Adrenal gland (tissue), 19 donors: ENCODE measurements at regions of chr13 and their contacts with region 1.

Region 1: GRCh38 chr13:85223883-85224656 is 575.1 kb downstream of the SLITRK6 start:
- DNase-seq: no peak
- H3K4me3 ChIP-seq: no peak overlapping the region
- H3K27ac ChIP-seq: no peak overlapping the region
- H3K4me1 ChIP-seq: no peaks in the 10 kb centered on the region
- H3K27me3 ChIP-seq: no peaks in the 10 kb centered on the region
- CTCF ChIP-seq: no peak
- POLR2A ChIP-seq: no peak

Region 2: DNA sequence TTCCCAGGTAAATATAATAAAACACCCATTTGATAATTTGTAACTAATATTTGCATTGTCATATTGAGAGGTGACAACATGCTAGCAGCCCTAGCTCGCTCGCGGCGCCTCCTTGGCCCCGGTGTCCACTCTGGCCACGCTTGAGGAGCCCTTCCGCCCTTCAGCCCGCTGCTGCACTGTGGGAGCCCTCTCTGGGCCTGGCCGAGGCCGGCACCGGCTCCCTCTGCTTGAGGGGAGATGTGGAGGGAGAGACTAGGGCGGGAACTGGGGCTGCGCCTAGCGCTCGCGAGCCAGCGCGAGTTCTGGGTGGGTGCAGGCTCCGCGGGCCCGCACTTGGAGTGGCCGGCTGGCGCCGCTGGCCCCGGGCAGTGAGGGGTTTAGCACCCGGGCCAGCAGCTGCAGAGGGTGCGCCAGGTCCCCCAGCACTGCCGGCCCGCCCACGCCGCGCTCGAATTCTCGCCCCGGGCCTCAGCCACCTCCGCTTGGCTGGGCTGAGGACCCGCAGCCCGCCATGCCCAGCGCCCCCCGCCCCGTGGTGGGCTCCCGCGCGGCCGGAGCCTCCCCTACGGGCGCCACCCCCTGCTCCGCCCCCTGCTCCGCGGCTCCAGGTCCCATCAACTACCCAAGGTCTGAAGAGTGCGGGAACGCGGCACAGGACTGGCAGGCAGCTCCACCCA is 19.3 kb before region 1 on chr13:
- intact Hi-C with region 1: loop called in 1 of 2 experiments (anchors 2 kb)
- DNase-seq: no peak
- H3K4me3 ChIP-seq: no peak overlapping the region
- H3K27ac ChIP-seq: no peak overlapping the region
- H3K4me1 ChIP-seq: no peaks in the 10 kb centered on the region
- H3K27me3 ChIP-seq: no peaks in the 10 kb centered on the region
- CTCF ChIP-seq: no peak
- POLR2A ChIP-seq: no peak

Region 3: DNA sequence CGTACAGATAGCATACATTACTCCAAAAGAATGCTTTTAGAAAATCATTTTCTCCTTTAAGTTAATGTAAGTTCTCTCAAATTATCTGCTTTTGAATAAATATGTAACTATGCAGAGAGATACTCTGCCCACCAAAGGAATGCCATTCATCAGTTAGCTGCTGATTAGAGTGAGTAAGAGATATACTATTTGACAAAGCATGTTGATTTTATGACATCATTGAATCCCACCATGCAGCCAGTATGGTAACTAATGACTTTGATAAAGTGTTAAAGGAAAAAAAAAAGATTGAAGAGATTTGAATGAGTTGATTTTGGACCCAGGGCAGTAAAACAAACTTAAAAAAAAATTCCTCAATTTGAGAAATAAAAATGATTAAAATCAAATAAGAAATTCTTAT is 53.7 kb after region 1 on chr13:
- intact Hi-C with region 1: no loop called
- DNase-seq: no peak
- H3K4me3 ChIP-seq: no peak overlapping the region
- H3K27ac ChIP-seq: no peak overlapping the region
- H3K4me1 ChIP-seq: no peaks in the 10 kb centered on the region
- H3K27me3 ChIP-seq: no peaks in the 10 kb centered on the region
- CTCF ChIP-seq: no peak
- POLR2A ChIP-seq: no peak